Sciatic nerve (tissue), 2 donors: ENCODE measurements at regions of chr3 and their contacts with region 1.

Region 1: GRCh38 chr3:74651292-74651691 is 36.8 kb upstream of the CNTN3 start:
- DNase-seq: no peak
- ATAC-seq: no peak

Region 2: GRCh38 chr3:73448761-73449301 is 1202.5 kb before region 1 on chr3:
- intact Hi-C with region 1: loop called (anchors 5 kb)
- DNase-seq: no peak
- ATAC-seq: no peak

Region 3: GRCh38 chr3:74390121-74390877 is 261.0 kb before region 1 on chr3:
- intact Hi-C with region 1: no loop called
- DNase-seq: no peak
- ATAC-seq: peak; percentile 26

Region 4: GRCh38 chr3:74766405-74766804 is 115.1 kb after region 1 on chr3:
- intact Hi-C with region 1: no loop called
- DNase-seq: no peak
- ATAC-seq: no peak